AG04449 (cell line): ENCODE measurements at regions of chr1 and their contacts with region 1.

Region 1: DNA sequence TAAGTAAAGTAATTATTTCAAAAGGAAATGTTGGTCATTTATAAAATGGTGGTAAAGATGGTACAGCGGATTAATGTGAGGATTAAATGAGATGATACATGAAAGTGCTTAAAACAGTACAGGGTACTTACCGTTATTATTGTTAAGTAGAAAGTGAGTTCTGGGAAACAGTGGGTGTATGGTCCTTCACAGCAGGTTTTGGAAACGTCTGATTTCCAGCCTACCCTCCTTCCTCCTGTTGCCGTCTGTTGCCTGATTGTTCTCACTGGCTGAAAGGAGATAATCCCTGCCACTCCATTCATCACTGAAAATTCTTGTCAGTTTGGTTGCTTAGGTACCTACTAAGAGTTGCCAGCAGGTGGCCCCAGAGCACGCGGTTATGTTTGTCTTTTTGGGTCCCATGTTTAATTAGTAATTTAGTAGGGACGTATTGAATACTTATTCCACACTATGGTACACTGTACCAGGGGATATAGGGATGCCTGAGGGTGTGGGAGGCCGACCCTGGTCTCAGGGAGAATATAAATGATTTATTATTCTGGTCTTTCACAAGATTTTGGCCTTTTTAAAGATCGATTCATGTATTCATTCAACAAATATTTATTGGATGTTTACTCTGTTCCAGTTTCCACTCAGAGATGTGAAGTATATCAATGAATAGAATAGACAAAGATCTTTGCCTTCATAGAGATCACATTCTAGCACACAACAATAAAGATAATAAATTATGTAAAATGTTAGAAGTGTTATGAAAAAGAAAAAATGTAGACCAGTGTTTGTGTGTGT is 30.8 kb upstream of the RPTN start:
- DNase-seq: no peak
- H3K4me3 ChIP-seq: no peak overlapping the region
- CTCF ChIP-seq: peak; percentile 63

Region 2: GRCh38 chr1:152084853-152085252 is 105.0 kb before region 1 on chr1:
- CTCF ChIA-PET with region 1: no interaction called
- POLR2A ChIA-PET with region 1: no interaction called
- DNase-seq: no peak
- H3K4me3 ChIP-seq: no peak overlapping the region
- CTCF ChIP-seq: no peak

Region 3: DNA sequence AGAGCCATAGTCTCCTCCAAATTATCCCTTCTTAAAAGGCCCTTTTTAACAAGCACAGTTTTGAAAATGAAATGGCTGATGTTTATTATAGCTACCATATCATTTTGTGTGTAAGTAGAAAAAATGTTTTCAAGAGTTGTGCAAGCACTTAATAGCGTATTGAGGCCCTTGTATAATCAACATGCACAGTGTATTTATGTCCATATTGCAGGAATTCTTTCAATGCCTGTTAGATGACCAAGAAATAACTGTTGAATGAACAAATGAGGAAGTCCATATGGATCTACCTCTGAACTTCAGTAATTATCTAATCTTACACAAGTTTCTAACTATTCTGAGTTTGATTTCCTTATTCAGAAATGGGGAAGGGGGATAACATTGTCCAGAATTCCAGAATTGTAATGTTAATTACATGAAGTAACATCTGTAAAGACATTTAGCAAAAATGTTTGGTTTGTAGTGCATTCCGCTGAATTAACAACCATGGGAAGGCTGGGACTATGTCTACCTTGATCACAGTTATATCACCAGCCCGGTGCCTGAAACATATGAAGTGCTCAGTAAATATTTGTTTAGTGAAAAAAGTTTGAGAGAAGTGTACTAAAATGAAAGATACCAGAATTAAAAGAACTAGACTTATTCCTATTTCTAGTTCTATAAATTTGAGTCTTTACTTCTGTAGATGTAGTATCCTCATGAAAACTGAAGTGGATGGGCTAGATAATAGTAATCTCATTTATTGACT is 93.6 kb before region 1 on chr1:
- CTCF ChIA-PET with region 1: no interaction called
- POLR2A ChIA-PET with region 1: no interaction called
- DNase-seq: no peak
- H3K4me3 ChIP-seq: no peak overlapping the region
- CTCF ChIP-seq: no peak

Region 4: GRCh38 chr1:152141974-152142584 is 47.8 kb before region 1 on chr1:
- CTCF ChIA-PET with region 1: interaction called, 214 read pairs
- POLR2A ChIA-PET with region 1: no interaction called
- DNase-seq: peak; percentile 23
- H3K4me3 ChIP-seq: no peak overlapping the region
- CTCF ChIP-seq: peak; percentile 65

Region 5: DNA sequence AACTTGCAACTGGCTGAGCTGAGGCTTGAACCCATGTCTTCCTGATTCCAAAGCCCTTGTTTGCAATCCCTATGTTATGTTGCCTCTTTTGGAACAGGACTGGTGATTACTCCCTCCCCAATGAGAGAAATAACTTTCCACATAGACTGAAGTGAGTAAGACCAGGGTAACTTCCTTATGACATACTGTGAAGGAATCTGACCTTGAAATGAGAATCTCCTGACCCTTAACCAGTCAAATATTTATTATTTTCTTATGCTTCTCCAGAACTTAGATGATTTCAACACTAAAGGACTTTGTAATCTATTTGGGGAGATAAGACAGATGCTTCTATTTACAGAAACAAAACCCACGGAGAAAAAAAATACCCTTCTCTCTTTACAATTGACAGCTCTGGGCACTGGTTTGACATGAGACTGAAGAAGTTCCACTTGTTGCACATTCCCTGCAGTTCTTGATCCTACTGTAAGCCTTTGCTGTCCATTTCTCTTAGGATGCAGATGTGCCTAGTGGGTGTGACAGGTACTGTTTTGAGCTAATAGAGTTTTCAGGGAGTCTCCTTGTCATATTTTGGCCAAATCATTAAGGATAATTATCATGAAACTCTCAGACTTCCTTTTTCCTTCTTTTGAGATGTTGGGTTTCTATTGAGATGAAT is 26.9 kb before region 1 on chr1:
- CTCF ChIA-PET with region 1: interaction called, 32 read pairs
- POLR2A ChIA-PET with region 1: no interaction called
- DNase-seq: peak; percentile 76
- H3K4me3 ChIP-seq: no peak overlapping the region
- CTCF ChIP-seq: no peak

Region 6: GRCh38 chr1:152347116-152347728 is 157.4 kb after region 1 on chr1:
- CTCF ChIA-PET with region 1: interaction called, 11 read pairs
- POLR2A ChIA-PET with region 1: no interaction called
- DNase-seq: no peak
- H3K4me3 ChIP-seq: no peak overlapping the region
- CTCF ChIP-seq: peak; percentile 66